ENCODE measurements at regions of chr5 and their contacts with region 1.

Region 1: DNA sequence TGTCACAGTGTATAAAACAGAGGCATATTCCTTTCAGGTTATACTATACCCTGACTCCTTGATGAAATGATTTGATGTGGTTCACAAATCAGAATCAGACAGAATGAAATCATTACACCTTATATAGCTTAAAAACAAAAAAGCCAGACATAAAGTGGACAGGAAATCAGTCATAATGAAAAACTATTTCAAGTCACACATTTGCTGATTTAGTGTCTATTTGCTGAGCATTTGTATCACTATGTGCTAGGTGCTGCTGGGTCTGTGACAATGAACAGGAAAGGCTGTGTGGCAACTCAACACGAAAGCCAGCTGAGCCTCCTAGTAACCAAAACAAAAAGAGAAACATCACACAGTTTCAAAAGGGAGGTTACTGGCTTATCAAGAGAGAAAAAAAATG is 194.0 kb downstream of the EFNA5 start:
- DNase-seq: peak in 28 of 35 experiments; percentile 2 to 74 (median 30)
- ATAC-seq: peak in 3 of 4 experiments; percentile 48 to 84 (median 56)
- H3K4me3 ChIP-seq: no peak overlapping the region
- H3K4me3 Mint-ChIP-seq: no peak overlapping the region
- H3K27ac ChIP-seq: peak overlapping the region; percentile 91
- H3K27ac Mint-ChIP-seq: peak overlapping the region; percentile 64 to 70
- H3K4me1 ChIP-seq: peaks cover 2 to 19% of the 10 kb centered on the region in 2 experiments
- H3K4me1 Mint-ChIP-seq: peaks cover 5 to 19% (median 5%) of the 10 kb centered on the region in 3 donors
- H3K27me3 ChIP-seq: no peaks in the 10 kb centered on the region
- H3K27me3 Mint-ChIP-seq: peaks cover 3 to 5% of the 10 kb centered on the region in 2 donors

Region 2: DNA sequence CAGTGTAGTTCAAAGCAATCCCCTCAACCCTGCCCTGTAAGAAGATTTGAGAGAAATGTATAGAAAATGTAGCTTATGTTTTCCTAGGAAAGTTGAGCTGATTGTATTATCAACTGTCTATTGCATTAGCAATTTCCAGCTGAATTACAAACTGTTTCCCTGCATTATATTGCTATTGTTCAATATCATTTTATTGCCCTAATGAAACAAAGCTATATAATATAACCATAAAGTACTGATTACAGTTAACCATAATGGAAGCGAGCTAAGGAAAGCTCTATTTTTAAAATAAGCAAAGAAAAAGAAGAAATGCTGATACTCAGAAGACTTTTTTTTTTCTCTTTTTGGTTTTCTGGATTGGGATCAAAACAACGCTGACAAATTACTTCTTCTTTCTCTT is 34.3 kb before region 1 on chr5:
- CTCF ChIA-PET with region 1: no interaction called
- POLR2A ChIA-PET with region 1: interaction called in 1 of 2 experiments, 12 read pairs
- DNase-seq: no peak
- ATAC-seq: no peak
- H3K4me3 ChIP-seq: no peak overlapping the region
- H3K4me3 Mint-ChIP-seq: no peak overlapping the region
- H3K27ac ChIP-seq: no peak overlapping the region
- H3K27ac Mint-ChIP-seq: no peak overlapping the region
- H3K4me1 ChIP-seq: no peaks in the 10 kb centered on the region
- H3K4me1 Mint-ChIP-seq: no peaks in the 10 kb centered on the region
- H3K27me3 ChIP-seq: no peaks in the 10 kb centered on the region
- H3K27me3 Mint-ChIP-seq: peaks cover 0 to 6% of the 10 kb centered on the region in 2 donors

Region 3: DNA sequence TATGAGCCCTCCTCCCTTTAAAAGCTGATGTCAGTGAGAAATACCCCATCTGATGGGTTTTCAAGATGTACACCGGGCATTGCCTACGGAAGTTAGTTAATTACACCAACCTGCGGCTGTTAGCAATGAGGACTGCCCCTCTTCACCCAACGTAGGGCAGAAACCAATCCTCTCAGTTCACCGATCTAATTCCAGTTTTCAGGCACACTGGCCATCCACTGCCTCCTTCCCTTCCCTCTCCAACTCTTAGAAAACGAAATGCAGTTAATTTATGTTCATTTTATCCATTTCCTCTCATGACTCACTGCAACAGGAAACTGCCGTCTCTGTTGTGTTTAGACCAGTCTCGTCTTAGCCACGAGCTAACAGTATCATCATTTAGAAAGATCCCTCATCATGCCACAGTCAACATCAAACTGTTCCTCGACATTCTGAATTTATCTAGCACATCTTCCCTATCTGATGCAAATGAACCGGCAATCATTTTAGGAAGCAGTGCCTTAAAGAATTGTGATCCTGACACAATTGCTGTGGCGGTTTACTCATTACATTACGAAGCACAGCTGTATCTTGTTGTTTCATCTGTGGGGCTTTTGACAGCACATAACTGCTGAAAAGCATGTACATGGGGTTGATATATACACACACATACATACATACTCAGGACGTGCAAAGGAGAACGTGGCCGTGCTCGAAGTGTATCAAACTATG is 25.3 kb after region 1 on chr5:
- CTCF ChIA-PET with region 1: no interaction called
- POLR2A ChIA-PET with region 1: no interaction called
- DNase-seq: peak in 2 of 35 experiments; percentile 7 to 24
- ATAC-seq: peak in 1 of 4 experiments; percentile 40
- H3K4me3 ChIP-seq: no peak overlapping the region
- H3K4me3 Mint-ChIP-seq: peak overlapping the region in 1 of 3 donors; percentile 3
- H3K27ac ChIP-seq: peak overlapping the region; percentile 44
- H3K27ac Mint-ChIP-seq: peak overlapping the region in 1 of 2 donors; percentile 6
- H3K4me1 ChIP-seq: peaks cover 2 to 8% of the 10 kb centered on the region in 2 experiments
- H3K4me1 Mint-ChIP-seq: peaks cover 0 to 11% (median 7%) of the 10 kb centered on the region in 3 donors
- H3K27me3 ChIP-seq: no peaks in the 10 kb centered on the region
- H3K27me3 Mint-ChIP-seq: peaks cover 0 to 18% of the 10 kb centered on the region in 2 donors

Measured in T-cell (primary cell).